GM12878 (cell line): ENCODE measurements at regions of chr13 and their contacts with region 1.

Region 1: DNA sequence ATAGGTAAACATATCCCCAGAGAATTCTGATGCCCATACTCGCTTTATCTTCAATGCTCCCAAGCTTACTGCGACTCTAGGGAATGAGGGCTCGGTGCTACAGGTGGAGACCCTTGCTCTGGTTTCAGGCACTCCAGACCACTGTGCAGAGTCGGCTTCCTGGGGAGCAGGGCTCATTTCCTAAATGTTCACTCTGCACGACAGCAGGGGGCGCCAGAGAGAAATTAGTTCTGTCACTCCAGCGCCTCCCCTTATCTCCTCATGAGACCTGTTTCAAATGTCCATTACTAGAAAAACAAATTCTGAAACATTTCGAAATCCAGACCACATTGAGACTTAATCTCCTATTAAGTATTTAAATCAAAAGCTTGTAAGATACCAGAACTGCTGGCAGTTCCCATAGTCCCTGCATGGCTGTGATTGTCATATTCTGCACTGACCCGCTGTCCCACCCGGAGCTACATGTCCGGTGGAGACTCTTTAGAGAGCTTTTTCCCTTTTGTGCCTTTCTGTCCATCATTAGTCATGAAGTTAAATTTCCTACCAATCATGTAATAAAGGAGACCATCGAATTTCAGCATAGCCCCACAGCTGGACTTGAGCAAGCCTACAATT is 22.4 kb downstream of the EPSTI1 start:
- DNase-seq: no peak
- ATAC-seq: peak; percentile 92
- H3K4me3 ChIP-seq: no peak overlapping the region
- H3K27ac ChIP-seq: no peak overlapping the region
- H3K4me1 ChIP-seq: peaks cover 10% of the 10 kb centered on the region
- H3K27me3 ChIP-seq: no peaks in the 10 kb centered on the region
- CTCF ChIP-seq: peak; percentile 79 to 84 (median 81)
- EP300 ChIP-seq: no peak
- POLR2A ChIP-seq: no peak
- RAD21 ChIP-seq: peak; percentile 67

Region 2: DNA sequence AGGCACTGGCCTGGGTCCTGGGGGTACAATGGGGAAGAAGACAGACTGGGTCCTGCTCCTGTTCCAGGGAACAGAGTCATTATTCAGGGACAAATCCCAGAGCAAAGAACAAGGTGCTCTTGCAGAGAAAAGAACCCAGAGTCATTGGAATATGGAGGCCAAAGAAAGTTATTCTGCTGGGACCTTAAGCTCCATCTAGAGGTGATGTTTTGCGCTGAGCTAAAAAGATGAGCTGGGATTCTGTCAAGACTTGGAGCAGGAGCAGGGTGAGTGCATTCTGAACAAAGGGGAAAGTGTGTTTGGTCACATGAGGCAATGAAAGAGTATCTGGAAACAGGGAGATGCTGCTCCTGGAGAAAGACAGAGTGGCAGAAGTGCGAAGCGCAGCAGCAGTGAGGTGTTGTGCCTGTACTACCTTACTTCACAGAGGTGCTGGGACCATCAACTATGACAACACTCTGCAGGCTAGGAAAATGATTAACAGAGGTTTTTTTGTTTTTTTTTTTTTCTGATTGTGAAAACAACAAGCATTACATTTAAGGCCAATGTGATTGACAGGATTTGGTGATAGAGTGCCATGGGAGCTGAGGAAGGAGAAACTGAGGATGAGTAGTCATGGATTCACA is 491.0 kb before region 1 on chr13:
- CTCF ChIA-PET with region 1: no interaction called
- POLR2A ChIA-PET with region 1: no interaction called
- RAD21 ChIA-PET with region 1: no interaction called
- SMC1A ChIA-PET with region 1: no interaction called
- in situ Hi-C with region 1: no loop called
- intact Hi-C with region 1: no loop called
- DNase-seq: no peak
- ATAC-seq: peak; percentile 90
- H3K4me3 ChIP-seq: no peak overlapping the region
- H3K27ac ChIP-seq: no peak overlapping the region
- H3K4me1 ChIP-seq: 0 out of 2 replicates have a peak, but pooled peaks cover 3% of the 10 kb centered on the region
- H3K27me3 ChIP-seq: no peaks in the 10 kb centered on the region
- CTCF ChIP-seq: peak; percentile 46 to 58 (median 47); a peak in 5 of 6 replicates
- EP300 ChIP-seq: no peak
- POLR2A ChIP-seq: no peak
- RAD21 ChIP-seq: peak; percentile 83

Region 3: GRCh38 chr13:42594970-42595571 is 374.6 kb before region 1 on chr13:
- CTCF ChIA-PET with region 1: interaction called, 6 read pairs
- POLR2A ChIA-PET with region 1: no interaction called
- RAD21 ChIA-PET with region 1: interaction called, 4 read pairs
- SMC1A ChIA-PET with region 1: interaction called, 5 read pairs
- in situ Hi-C with region 1: no loop called
- intact Hi-C with region 1: loop called (anchors 10 kb)
- DNase-seq: peak; percentile 46
- ATAC-seq: peak; percentile 91
- H3K4me3 ChIP-seq: no peak overlapping the region
- H3K27ac ChIP-seq: no peak overlapping the region
- H3K4me1 ChIP-seq: no peaks in the 10 kb centered on the region; the same call in 1 of the 2 replicates
- H3K27me3 ChIP-seq: no peaks in the 10 kb centered on the region
- CTCF ChIP-seq: peak; percentile 60 to 86 (median 76)
- EP300 ChIP-seq: no peak
- POLR2A ChIP-seq: no peak
- RAD21 ChIP-seq: peak; percentile 95

Region 4: DNA sequence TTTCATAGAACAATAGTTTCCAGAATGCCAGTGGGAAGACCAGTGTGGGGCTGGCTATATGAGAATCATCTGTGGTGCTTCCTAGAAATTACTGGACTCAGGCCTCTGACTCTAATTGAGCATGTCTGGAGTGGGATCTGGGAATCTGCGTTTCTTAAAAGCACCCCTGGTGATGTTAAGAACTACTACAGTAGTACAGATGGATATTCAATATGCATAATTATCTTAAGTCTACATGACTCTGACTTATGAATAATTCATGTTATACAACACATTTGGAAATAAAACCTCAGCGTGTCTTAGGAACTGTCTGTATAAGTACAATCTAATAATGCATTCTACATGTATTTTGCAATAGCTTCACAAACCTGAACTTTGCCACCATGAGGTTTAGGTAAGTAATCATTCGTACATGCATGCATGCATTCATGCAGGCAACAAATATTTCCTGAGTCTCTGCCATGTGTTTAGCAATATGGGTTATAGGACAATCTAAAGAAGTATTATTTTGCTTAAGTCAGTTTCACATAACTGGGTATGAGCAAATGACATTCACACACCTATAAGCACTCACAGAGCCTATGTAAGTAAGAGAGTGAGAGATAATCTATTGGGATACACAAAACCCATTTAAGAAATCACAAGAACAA is 39.7 kb before region 1 on chr13:
- CTCF ChIA-PET with region 1: no interaction called
- POLR2A ChIA-PET with region 1: no interaction called
- RAD21 ChIA-PET with region 1: no interaction called
- SMC1A ChIA-PET with region 1: no interaction called
- in situ Hi-C with region 1: no loop called
- intact Hi-C with region 1: no loop called
- DNase-seq: no peak
- ATAC-seq: no peak
- H3K4me3 ChIP-seq: no peak overlapping the region
- H3K27ac ChIP-seq: no peak overlapping the region
- H3K4me1 ChIP-seq: no peaks in the 10 kb centered on the region
- H3K27me3 ChIP-seq: no peaks in the 10 kb centered on the region
- CTCF ChIP-seq: no peak
- EP300 ChIP-seq: no peak
- POLR2A ChIP-seq: no peak
- RAD21 ChIP-seq: no peak

Region 5: DNA sequence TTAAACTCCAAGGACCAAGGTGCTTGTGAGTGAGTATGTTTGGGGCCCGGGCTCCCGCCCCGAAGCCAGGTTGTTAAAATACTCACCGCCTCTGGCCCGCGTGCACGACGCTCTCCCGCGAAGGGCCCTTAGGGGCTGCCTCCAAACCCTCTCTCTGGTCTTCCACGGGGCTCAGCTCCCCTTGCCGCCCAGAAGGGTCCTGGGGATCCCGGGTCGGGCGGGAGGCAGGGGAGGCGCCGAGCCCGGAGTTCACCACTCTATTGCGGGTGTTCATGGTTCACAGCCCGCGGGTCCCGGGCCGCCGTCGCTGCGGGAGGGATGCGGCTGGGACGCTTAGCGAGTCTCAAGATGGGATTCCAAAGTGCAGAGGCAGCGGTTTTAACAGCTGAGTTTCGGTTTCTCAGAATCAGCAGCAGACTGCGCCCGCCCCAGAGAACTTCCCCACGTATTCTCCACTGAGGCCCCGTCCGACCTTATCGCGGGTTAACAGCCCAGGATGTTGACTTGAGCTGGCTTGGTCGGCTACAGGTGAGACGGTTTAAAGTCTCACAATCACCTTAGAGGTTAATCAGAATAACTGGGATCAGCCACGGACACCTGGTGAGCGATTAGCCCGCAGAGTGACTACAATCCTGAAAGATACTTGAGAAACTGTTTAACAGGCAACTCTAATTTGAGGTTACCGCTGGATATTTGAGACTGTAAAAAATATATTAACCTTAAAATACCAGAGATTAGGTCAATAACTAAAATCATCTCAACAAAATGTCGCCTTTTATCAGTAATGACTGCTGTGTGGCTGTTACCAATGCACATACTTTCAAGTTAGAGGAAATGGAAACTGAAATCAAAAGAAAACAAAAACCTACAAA is 22.5 kb after region 1 on chr13 and contains the start of gene EPSTI1:
- CTCF ChIA-PET with region 1: interaction called, 59 read pairs
- POLR2A ChIA-PET with region 1: interaction called, 6 read pairs
- RAD21 ChIA-PET with region 1: interaction called, 12 read pairs
- SMC1A ChIA-PET with region 1: interaction called, 60 read pairs
- in situ Hi-C with region 1: no loop called
- intact Hi-C with region 1: no loop called
- DNase-seq: no peak
- ATAC-seq: peak; percentile 82
- H3K4me3 ChIP-seq: peak within 1 kb of the TSS; percentile 86
- H3K27ac ChIP-seq: peak within 1 kb of the TSS; percentile 99
- H3K4me1 ChIP-seq: peaks cover 28% of the 10 kb centered on the region
- H3K27me3 ChIP-seq: no peaks in the 10 kb centered on the region
- CTCF ChIP-seq: no peak
- EP300 ChIP-seq: peak in 1 of 2 experiments; percentile 67; a peak in 1 of 4 replicates
- POLR2A ChIP-seq: peak; percentile 85
- RAD21 ChIP-seq: no peak
- polyA plus RNA-seq, gene EPSTI1: 4.7 to 8.9 TPM

Region 6: GRCh38 chr13:43023289-43023951 is 53.8 kb after region 1 on chr13 and contains the start of gene DNAJC15:
- CTCF ChIA-PET with region 1: interaction called, 17 read pairs
- POLR2A ChIA-PET with region 1: no interaction called
- RAD21 ChIA-PET with region 1: interaction called, 16 read pairs
- SMC1A ChIA-PET with region 1: interaction called, 10 read pairs
- in situ Hi-C with region 1: no loop called
- intact Hi-C with region 1: loop called (anchors 1 kb)
- DNase-seq: peak; percentile 57
- ATAC-seq: peak; percentile 89
- H3K4me3 ChIP-seq: peak within 1 kb of the TSS; percentile 93
- H3K27ac ChIP-seq: peak within 1 kb of the TSS; percentile 83
- H3K4me1 ChIP-seq: peaks cover 6% of the 10 kb centered on the region
- H3K27me3 ChIP-seq: no peaks in the 10 kb centered on the region
- CTCF ChIP-seq: peak; percentile 22 to 31 (median 30); a peak in 3 of 6 replicates
- EP300 ChIP-seq: no peak
- POLR2A ChIP-seq: peak; percentile 97
- RAD21 ChIP-seq: peak; percentile 25; the same call in 1 of the 2 replicates
- polyA plus RNA-seq, gene DNAJC15: 102 to 104 TPM

Region 7: GRCh38 chr13:43074824-43075510 is 105.3 kb after region 1 on chr13:
- CTCF ChIA-PET with region 1: interaction called, 10 read pairs
- POLR2A ChIA-PET with region 1: interaction called, 3 read pairs
- RAD21 ChIA-PET with region 1: interaction called, 6 read pairs
- SMC1A ChIA-PET with region 1: interaction called, 16 read pairs
- in situ Hi-C with region 1: no loop called
- intact Hi-C with region 1: loop called (anchors 5 kb)
- DNase-seq: no peak
- ATAC-seq: peak; percentile 90
- H3K4me3 ChIP-seq: peak overlapping the region; percentile 9; the same call in 1 of the 2 replicates
- H3K27ac ChIP-seq: peak overlapping the region; percentile 60
- H3K4me1 ChIP-seq: peaks cover 36% of the 10 kb centered on the region
- H3K27me3 ChIP-seq: no peaks in the 10 kb centered on the region
- CTCF ChIP-seq: no peak
- EP300 ChIP-seq: peak in 1 of 2 experiments; percentile 56; a peak in 2 of 4 replicates
- POLR2A ChIP-seq: no peak
- RAD21 ChIP-seq: no peak

Region 8: GRCh38 chr13:43132257-43132656 is 162.6 kb after region 1 on chr13:
- CTCF ChIA-PET with region 1: interaction called, 51 read pairs
- POLR2A ChIA-PET with region 1: interaction called, 3 read pairs
- RAD21 ChIA-PET with region 1: interaction called, 17 read pairs
- SMC1A ChIA-PET with region 1: interaction called, 29 read pairs
- in situ Hi-C with region 1: no loop called
- intact Hi-C with region 1: loop called (anchors 2 kb)
- DNase-seq: no peak
- ATAC-seq: peak; percentile 71
- H3K4me3 ChIP-seq: no peak overlapping the region
- H3K27ac ChIP-seq: no peak overlapping the region
- H3K4me1 ChIP-seq: 0 out of 2 replicates have a peak, but pooled peaks cover 8% of the 10 kb centered on the region
- H3K27me3 ChIP-seq: no peaks in the 10 kb centered on the region; a peak in 1 of 4 replicates
- CTCF ChIP-seq: peak; percentile 18 to 67 (median 39); a peak in 5 of 6 replicates
- EP300 ChIP-seq: no peak
- POLR2A ChIP-seq: no peak
- RAD21 ChIP-seq: peak; percentile 77

Region 9: GRCh38 chr13:43804461-43805070 is 834.9 kb after region 1 on chr13:
- CTCF ChIA-PET with region 1: interaction called, 20 read pairs
- POLR2A ChIA-PET with region 1: interaction called, 3 read pairs
- RAD21 ChIA-PET with region 1: interaction called, 10 read pairs
- SMC1A ChIA-PET with region 1: interaction called, 7 read pairs
- in situ Hi-C with region 1: loop called (anchors 10 kb)
- intact Hi-C with region 1: loop called (anchors 1 kb)
- DNase-seq: peak; percentile 13
- ATAC-seq: peak; percentile 83
- H3K4me3 ChIP-seq: no peak overlapping the region
- H3K27ac ChIP-seq: no peak overlapping the region
- H3K4me1 ChIP-seq: no peaks in the 10 kb centered on the region
- H3K27me3 ChIP-seq: no peaks in the 10 kb centered on the region
- CTCF ChIP-seq: peak; percentile 17 to 54 (median 28); a peak in 4 of 6 replicates
- EP300 ChIP-seq: no peak
- POLR2A ChIP-seq: no peak
- RAD21 ChIP-seq: peak; percentile 66